Activated naive CD4-positive, alpha-beta T cell treated with anti-CD3 and anti-CD28 coated beads for 36 hours (primary cell): ENCODE measurements at regions of chr21 and their contacts with region 1.

Region 1: GRCh38 chr21:34603002-34603709 is 11.8 kb downstream of the RCAN1 start:
- DNase-seq: peak; percentile 78
- H3K4me3 Mint-ChIP-seq: no peak overlapping the region
- H3K27ac Mint-ChIP-seq: no peak overlapping the region
- H3K4me1 Mint-ChIP-seq: peaks cover 2% of the 10 kb centered on the region
- H3K27me3 Mint-ChIP-seq: no peaks in the 10 kb centered on the region

Region 2: GRCh38 chr21:34227386-34227852 is 375.7 kb before region 1 on chr21:
- CTCF ChIA-PET with region 1: no interaction called
- intact Hi-C with region 1: no loop called
- DNase-seq: no peak
- H3K4me3 Mint-ChIP-seq: no peak overlapping the region
- H3K27ac Mint-ChIP-seq: no peak overlapping the region
- H3K4me1 Mint-ChIP-seq: no peaks in the 10 kb centered on the region
- H3K27me3 Mint-ChIP-seq: no peaks in the 10 kb centered on the region

Region 3: GRCh38 chr21:34510148-34511142 is 92.7 kb before region 1 on chr21:
- CTCF ChIA-PET with region 1: interaction called, 28 read pairs
- intact Hi-C with region 1: loop called (anchors 1 kb)
- DNase-seq: peak; percentile 68
- H3K4me3 Mint-ChIP-seq: no peak overlapping the region
- H3K27ac Mint-ChIP-seq: no peak overlapping the region
- H3K4me1 Mint-ChIP-seq: no peaks in the 10 kb centered on the region
- H3K27me3 Mint-ChIP-seq: no peaks in the 10 kb centered on the region

Region 4: GRCh38 chr21:34614633-34615486 is 11.7 kb after region 1 on chr21 and contains the start of gene RCAN1:
- CTCF ChIA-PET with region 1: interaction called, 15 read pairs
- intact Hi-C with region 1: no loop called
- DNase-seq: peak; percentile 90
- H3K4me3 Mint-ChIP-seq: peak within 1 kb of the TSS; percentile 84
- H3K27ac Mint-ChIP-seq: peak within 1 kb of the TSS; percentile 48
- H3K4me1 Mint-ChIP-seq: peaks cover 17% of the 10 kb centered on the region
- H3K27me3 Mint-ChIP-seq: no peaks in the 10 kb centered on the region
- total RNA-seq, gene RCAN1: 2.3 to 2.9 TPM

Region 5: GRCh38 chr21:34722684-34723300 is 119.6 kb after region 1 on chr21:
- CTCF ChIA-PET with region 1: no interaction called
- intact Hi-C with region 1: no loop called
- DNase-seq: peak; percentile 49
- H3K4me3 Mint-ChIP-seq: no peak overlapping the region
- H3K27ac Mint-ChIP-seq: no peak overlapping the region
- H3K4me1 Mint-ChIP-seq: no peaks in the 10 kb centered on the region
- H3K27me3 Mint-ChIP-seq: no peaks in the 10 kb centered on the region